ENCODE measurements at regions of chr6 and their contacts with region 1.

Region 1: GRCh38 chr6:32796848-32797776 is 19.7 kb downstream of the HLA-DOB start:
- DNase-seq: peak; percentile 80
- H3K4me3 Mint-ChIP-seq: peak overlapping the region; percentile 27
- H3K27ac Mint-ChIP-seq: no peak overlapping the region
- H3K4me1 Mint-ChIP-seq: peaks cover 7% of the 10 kb centered on the region
- H3K27me3 Mint-ChIP-seq: peaks cover 91% of the 10 kb centered on the region
- CTCF ChIP-seq: peak; percentile 89

Region 2: DNA sequence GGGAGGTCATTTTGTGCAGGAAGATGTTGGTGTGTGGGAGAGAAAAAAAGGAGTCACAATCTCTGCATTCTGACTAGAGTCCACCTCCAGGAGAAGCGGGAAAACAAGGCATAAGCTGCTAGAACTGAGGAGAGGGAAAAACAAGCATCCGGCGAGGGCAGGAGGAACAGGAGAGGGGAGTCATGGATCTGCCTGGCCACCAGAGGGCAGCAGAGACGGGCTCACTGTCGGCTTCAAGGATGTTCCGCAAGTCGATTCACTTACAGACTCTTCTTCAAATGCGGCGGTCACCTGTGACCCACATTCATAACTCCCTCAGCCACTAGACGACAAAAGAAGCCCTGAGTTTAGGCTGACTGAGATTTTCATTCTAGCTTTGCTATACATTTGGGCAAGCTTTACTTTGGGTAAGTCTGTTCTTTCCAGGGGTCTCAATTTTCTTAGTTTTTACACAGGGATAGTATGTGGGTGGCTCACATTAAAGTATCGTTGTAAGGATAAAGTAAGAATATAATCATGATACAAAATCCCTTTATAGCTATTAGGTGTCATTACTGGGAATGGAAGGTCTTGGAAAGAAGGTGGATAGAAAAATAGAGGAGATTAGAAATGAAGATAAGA is 383.6 kb before region 1 on chr6:
- CTCF ChIA-PET with region 1: interaction called, 7 read pairs
- intact Hi-C with region 1: loop called (anchors 1 kb)
- DNase-seq: peak; percentile 94
- H3K4me3 Mint-ChIP-seq: no peak overlapping the region
- H3K27ac Mint-ChIP-seq: no peak overlapping the region
- H3K4me1 Mint-ChIP-seq: peaks cover 21% of the 10 kb centered on the region
- H3K27me3 Mint-ChIP-seq: peaks cover 84% of the 10 kb centered on the region
- CTCF ChIP-seq: peak; percentile 96